ENCODE measurements at regions of chr16 and their contacts with region 1.

Region 1: GRCh38 chr16:67935402-67936123 is 1.1 kb downstream of the PSMB10 start:
- DNase-seq: peak; percentile 98
- H3K4me3 Mint-ChIP-seq: peak overlapping the region; percentile 100
- H3K27ac Mint-ChIP-seq: peak overlapping the region; percentile 99
- H3K4me1 Mint-ChIP-seq: peaks cover 41% of the 10 kb centered on the region
- H3K27me3 Mint-ChIP-seq: no peaks in the 10 kb centered on the region

Region 2: DNA sequence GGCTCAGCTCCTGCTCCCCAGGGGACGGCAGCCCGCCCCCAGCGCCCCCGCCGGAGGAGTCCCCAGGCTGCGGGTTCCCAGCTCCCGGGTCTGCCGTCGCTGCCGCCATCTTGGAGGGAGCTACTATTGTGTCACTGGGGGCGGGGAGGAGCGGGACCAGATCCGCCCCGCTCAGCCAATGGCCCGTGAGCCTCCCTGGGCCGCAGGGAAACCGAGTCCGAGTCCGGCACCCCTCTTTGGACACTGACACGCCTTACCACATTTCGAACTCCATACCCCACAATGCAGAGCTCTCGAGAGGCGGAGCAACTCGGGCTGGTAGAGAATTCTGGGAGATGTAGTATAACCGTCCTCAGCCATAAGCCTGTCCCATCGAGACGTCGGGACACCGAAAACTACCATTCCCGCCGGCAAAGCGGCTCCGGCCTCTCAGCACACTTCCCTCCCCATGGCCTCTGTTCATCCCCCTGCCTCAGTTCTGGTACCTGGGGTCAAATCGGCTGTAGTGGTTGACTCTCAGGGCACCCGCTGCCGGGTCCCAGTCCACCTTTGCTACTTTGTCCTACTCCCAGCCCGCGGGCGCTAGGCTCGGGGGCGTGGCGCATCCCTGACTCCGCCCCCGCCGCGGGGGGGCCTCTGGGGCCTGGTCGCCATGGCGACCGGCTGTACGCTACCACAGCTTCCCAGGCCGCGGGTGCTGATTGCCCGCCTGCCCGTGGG is 129.0 kb before region 1 on chr16 and contains the starts of genes RANBP10 and TSNAXIP1:
- CTCF ChIA-PET with region 1: no interaction called
- POLR2A ChIA-PET with region 1: interaction called, 8 read pairs
- intact Hi-C with region 1: loop called (anchors 5 kb)
- DNase-seq: peak; percentile 98
- H3K4me3 Mint-ChIP-seq: peak within 1 kb of the TSS; percentile 93
- H3K27ac Mint-ChIP-seq: peak within 1 kb of the TSS; percentile 91
- H3K4me1 Mint-ChIP-seq: peaks cover 39% of the 10 kb centered on the region
- H3K27me3 Mint-ChIP-seq: no peaks in the 10 kb centered on the region
- total RNA-seq, gene RANBP10: 14.9 to 18.1 TPM
- total RNA-seq, gene TSNAXIP1: 0.77 to 0.81 TPM

Region 3: DNA sequence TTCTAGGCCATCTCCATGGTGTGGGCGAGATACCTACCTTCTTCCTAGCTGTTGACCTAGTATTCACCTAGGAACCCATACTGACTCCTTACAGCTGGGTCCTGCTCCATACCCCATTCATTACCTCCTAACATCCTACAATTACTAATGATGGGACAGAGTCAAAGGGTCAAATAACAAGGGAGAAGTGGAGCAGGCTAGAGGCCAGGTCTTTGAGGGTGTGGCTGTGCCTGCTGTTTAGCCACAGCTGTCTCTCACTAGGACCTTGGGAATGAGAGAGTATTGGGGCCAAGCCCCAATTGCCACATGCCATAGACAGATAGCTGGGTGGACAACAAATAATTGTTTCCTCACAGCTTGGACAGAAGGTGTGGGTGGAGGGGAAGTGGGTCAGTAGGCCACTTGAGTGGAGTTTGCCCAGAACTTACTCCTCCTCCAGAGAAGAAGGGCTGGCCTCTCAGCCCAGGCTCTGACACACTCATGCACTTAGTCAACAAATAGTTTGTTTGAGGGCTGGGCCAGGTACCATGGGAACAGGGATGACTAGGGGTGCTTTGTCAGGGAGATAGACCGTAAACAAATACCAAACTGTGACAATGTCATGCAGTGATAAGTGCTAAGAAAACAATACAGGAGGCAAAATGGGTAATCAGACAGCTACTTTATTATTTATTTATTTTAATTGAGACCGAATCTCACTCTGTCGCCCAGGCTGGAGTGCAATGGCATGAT is 77.9 kb before region 1 on chr16:
- CTCF ChIA-PET with region 1: no interaction called
- POLR2A ChIA-PET with region 1: no interaction called
- intact Hi-C with region 1: no loop called
- DNase-seq: peak; percentile 63
- H3K4me3 Mint-ChIP-seq: no peak overlapping the region
- H3K27ac Mint-ChIP-seq: peak overlapping the region; percentile 3
- H3K4me1 Mint-ChIP-seq: peaks cover 38% of the 10 kb centered on the region
- H3K27me3 Mint-ChIP-seq: no peaks in the 10 kb centered on the region

Region 4: DNA sequence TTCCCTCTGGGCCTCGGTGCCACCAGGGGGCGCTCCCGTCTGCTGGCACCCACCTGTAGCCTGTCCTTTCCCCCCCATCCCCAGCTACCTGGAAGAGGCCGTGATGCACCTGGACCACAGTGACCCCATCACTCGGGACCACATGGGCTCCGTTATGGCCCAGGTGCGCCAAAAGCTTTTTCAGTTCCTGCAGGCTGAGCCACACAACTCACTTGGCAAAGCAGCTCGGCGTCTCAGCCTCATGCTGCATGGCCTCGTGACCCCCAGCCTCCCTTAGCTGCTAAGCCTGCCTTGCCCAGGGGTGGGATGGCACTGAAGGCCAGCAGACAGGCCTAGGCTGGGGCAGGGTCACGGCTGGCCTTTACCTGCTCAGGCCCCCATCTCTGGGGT is 51.7 kb before region 1 on chr16:
- CTCF ChIA-PET with region 1: interaction called, 32 read pairs
- POLR2A ChIA-PET with region 1: interaction called, 9 read pairs
- intact Hi-C with region 1: no loop called
- DNase-seq: peak; percentile 73
- H3K4me3 Mint-ChIP-seq: no peak overlapping the region
- H3K27ac Mint-ChIP-seq: no peak overlapping the region
- H3K4me1 Mint-ChIP-seq: no peaks in the 10 kb centered on the region
- H3K27me3 Mint-ChIP-seq: no peaks in the 10 kb centered on the region

Region 5: GRCh38 chr16:67917852-67918236 is 17.7 kb before region 1 on chr16:
- CTCF ChIA-PET with region 1: no interaction called
- POLR2A ChIA-PET with region 1: no interaction called
- intact Hi-C with region 1: loop called (anchors 1 kb)
- DNase-seq: peak; percentile 75
- H3K4me3 Mint-ChIP-seq: no peak overlapping the region
- H3K27ac Mint-ChIP-seq: peak overlapping the region; percentile 77
- H3K4me1 Mint-ChIP-seq: peaks cover 31% of the 10 kb centered on the region
- H3K27me3 Mint-ChIP-seq: no peaks in the 10 kb centered on the region

Region 6: GRCh38 chr16:67979955-67980678 is 44.6 kb after region 1 on chr16 and contains the start of gene DPEP3:
- CTCF ChIA-PET with region 1: no interaction called
- POLR2A ChIA-PET with region 1: no interaction called
- intact Hi-C with region 1: loop called (anchors 5 kb)
- DNase-seq: no peak
- H3K4me3 Mint-ChIP-seq: no peak within 1 kb of the TSS
- H3K27ac Mint-ChIP-seq: no peak within 1 kb of the TSS
- H3K4me1 Mint-ChIP-seq: peaks cover 22% of the 10 kb centered on the region
- H3K27me3 Mint-ChIP-seq: no peaks in the 10 kb centered on the region
- total RNA-seq, gene DPEP3: not detected

Region 7: DNA sequence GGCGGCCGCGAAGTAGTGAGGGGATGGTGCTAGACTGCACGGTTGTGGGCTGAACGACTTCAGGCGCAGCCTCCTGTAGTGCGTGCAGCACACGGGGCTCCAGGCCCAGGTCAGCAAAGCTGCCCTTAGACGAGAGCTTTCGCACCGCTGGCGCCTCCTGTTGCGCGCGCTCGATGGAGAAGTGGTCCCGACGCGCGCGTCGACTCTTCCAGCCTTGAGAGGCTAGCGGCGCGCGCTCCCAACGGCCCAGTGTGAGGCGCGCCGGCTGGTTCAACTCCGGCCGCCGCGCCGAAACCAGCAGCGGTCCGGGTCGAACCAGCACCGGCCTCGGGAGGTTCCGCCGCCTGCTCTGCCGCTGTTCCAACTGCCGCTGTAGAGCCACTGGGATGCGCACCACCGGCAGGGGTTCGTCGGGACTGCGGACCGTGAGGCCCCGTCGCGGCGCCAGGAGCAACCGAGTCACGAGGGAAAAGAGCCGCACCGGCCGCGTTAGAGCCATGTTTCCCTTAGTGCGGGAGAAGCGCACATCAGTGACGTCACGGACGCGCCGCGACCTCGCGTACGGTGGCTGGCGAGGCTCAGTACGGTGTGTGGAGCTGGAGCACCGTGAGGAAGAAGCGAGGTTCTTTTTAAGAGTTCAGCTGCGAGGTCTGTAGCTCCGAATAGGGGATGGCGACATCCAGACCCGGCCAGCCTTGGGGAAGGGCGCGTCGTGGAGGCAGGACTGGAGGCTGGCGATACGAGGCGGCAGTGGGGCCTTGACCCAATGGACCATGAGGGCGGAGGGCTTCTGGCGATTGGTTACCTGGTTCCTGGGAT is 87.3 kb after region 1 on chr16 and contains the starts of genes DDX28 and DUS2:
- CTCF ChIA-PET with region 1: interaction called, 8 read pairs
- POLR2A ChIA-PET with region 1: interaction called, 19 read pairs
- intact Hi-C with region 1: loop called (anchors 2 kb)
- DNase-seq: peak; percentile 97
- H3K4me3 Mint-ChIP-seq: peak within 1 kb of the TSS; percentile 95
- H3K27ac Mint-ChIP-seq: peak within 1 kb of the TSS; percentile 94
- H3K4me1 Mint-ChIP-seq: peaks cover 26% of the 10 kb centered on the region
- H3K27me3 Mint-ChIP-seq: no peaks in the 10 kb centered on the region
- total RNA-seq, gene DDX28: 12.8 to 14.5 TPM
- total RNA-seq, gene DUS2: 29.2 to 29.4 TPM

Region 8: DNA sequence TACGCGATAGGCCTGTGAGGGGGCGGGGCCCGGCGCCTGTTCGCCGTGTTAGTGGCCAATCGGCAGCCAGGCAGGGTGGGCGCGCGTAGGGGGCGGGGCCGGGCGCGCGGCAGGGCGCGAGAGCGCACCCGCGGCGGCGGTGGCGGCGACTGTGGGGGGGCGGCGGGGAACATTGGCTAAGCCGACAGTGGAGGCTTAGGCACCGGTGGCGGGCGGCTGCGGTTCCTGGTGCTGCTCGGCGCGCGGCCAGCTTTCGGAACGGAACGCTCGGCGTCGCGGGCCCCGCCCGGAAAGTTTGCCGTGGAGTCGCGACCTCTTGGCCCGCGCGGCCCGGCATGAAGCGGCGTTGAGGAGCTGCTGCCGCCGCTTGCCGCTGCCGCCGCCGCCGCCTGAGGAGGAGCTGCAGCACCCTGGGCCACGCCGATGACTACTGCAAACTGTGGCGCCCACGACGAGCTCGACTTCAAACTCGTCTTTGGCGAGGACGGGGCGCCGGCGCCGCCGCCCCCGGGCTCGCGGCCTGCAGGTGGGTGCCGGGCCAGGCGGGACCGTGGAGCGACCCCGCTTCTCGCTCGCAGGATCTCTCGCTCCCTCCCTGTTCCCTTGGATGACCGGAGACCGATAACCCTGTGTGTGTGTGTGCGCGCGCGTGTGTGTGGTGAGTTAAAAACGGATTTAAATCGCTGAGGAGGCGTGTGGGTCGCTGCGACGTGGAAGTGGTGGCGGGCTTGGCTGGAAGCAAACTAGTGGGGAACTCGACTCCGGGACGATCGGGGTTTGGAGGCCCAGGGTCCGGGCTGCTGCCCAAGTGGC is 149.9 kb after region 1 on chr16 and contains the start of gene NFATC3:
- CTCF ChIA-PET with region 1: interaction called, 3 read pairs
- POLR2A ChIA-PET with region 1: interaction called, 6 read pairs
- intact Hi-C with region 1: loop called (anchors 2 kb)
- DNase-seq: peak; percentile 99
- H3K4me3 Mint-ChIP-seq: peak within 1 kb of the TSS; percentile 86
- H3K27ac Mint-ChIP-seq: peak within 1 kb of the TSS; percentile 98
- H3K4me1 Mint-ChIP-seq: peaks cover 62% of the 10 kb centered on the region
- H3K27me3 Mint-ChIP-seq: no peaks in the 10 kb centered on the region
- total RNA-seq, gene NFATC3: 83.4 to 85.2 TPM

Measured in activated CD4-positive, alpha-beta memory T cell treated with anti-CD3 and anti-CD28 coated beads for 36 hours (primary cell).